ENCODE measurements at regions of chr15 and their contacts with region 1.

Region 1: GRCh38 chr15:83559310-83559966 is 94.5 kb upstream of the ADAMTSL3 start:
- DNase-seq: no peak
- H3K4me3 ChIP-seq: no peak overlapping the region
- H3K27ac ChIP-seq: no peak overlapping the region
- H3K4me1 ChIP-seq: peaks cover 0 to 24% (median 5%) of the 10 kb centered on the region in 3 donors
- H3K27me3 ChIP-seq: peaks cover 0 to 3% (median 0%) of the 10 kb centered on the region in 4 donors
- CTCF ChIP-seq: peak; percentile 38 to 85 (median 74)
- POLR2A ChIP-seq: no peak

Region 2: DNA sequence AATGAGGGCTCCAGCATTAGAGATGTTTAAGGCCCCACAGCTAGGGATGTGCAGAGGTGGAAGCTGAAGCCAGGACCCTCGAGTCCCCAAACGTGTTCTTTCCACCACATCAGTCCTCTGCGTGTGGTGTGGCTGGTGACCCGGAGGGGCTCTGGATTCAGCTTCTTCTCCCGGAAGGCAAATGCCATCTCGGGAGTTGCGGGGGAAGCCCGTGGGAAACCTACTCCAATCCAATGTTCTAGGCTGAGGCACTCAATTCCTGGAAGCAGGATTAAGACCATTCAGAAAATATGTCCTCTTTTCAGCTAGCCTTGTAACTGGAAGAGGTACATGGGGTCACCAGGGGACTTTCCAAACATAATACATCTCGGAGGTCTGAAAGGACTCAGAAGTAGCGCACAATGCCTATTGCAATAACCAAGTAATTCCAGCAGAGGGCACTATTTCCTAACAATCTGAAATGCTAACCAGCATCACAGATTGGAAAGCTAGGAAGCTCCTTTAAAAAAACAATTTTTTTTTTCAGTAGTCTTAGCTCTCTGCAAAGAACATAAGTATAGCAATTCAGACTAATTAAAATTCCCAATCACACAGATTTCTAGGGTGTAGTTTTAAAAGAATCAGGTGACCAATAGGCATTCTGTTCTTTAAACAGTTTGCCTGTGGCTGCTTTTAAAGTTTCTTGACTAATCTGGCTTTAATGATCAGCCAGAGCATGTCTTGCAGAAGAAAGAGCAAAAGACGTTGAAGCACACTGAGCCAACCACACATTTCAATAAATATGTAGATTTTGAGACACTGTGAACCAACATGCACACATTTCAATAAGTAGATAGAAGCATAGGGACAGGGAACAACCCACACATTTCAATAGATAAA is 311.0 kb before region 1 on chr15:
- intact Hi-C with region 1: loop called (anchors 10 kb)
- DNase-seq: no peak
- H3K4me3 ChIP-seq: no peak overlapping the region
- H3K27ac ChIP-seq: no peak overlapping the region
- H3K4me1 ChIP-seq: peaks cover 0 to 7% (median 3%) of the 10 kb centered on the region in 3 donors
- H3K27me3 ChIP-seq: peaks cover 0 to 57% (median 0%) of the 10 kb centered on the region in 4 donors
- CTCF ChIP-seq: peak; percentile 60 to 97 (median 94)
- POLR2A ChIP-seq: no peak

Region 3: DNA sequence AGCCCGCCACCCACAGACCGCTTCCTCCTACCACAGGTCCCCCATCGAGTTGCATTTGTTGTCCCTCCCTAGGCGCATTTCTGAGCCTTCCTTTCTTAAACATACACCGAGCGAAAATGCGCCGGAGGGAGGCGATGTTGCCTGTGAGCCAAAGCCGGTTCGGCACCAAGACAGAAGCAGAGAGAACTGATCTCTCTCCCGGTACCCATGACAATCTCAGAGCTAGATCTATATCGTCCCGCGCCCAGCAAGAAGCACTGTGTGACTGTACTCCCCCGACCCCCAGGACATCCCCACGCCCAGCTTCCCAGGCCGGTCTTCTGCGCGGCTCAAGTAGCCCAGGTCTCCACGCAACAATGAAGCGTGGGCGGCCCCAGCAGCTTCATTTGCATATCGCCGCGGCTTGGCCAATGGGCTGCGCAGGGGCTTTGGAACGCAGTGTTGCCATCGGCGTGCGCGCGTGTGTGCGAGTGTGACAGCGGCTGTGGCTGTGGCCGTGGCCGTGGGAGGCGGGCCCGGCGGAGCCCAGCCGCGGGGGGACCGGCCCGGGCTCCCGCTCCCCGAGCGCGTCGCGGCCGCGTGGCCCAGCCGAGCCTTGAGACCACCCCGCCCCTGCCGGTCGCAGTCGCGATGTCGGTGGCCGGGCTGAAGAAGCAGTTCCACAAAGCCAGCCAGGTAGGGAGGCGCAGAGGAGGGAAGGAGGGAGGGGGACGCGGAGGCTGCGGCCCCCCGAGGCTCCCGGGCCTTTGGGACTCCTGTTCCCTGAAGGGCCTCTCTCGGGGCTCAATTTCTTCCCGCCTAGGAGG is 112.3 kb before region 1 on chr15 and contains the start of gene SH3GL3:
- intact Hi-C with region 1: loop called (anchors 5 kb)
- DNase-seq: peak; percentile 19
- H3K4me3 ChIP-seq: peak within 1 kb of the TSS; percentile 47 to 70 (median 64)
- H3K27ac ChIP-seq: peak within 1 kb of the TSS in 3 of 4 donors; percentile 18 to 81 (median 22)
- H3K4me1 ChIP-seq: peaks cover 7 to 21% (median 13%) of the 10 kb centered on the region in 3 donors
- H3K27me3 ChIP-seq: peaks cover 0 to 49% (median 0%) of the 10 kb centered on the region in 4 donors
- CTCF ChIP-seq: peak in 5 of 6 experiments; percentile 18 to 50 (median 23)
- POLR2A ChIP-seq: peak in 1 of 4 donors; percentile 22
- total RNA-seq, gene SH3GL3: 0.57 to 5.7 (median 2.1) TPM

Region 4: GRCh38 chr15:83784975-83785374 is 225.5 kb after region 1 on chr15:
- intact Hi-C with region 1: no loop called
- DNase-seq: no peak
- H3K4me3 ChIP-seq: no peak overlapping the region
- H3K27ac ChIP-seq: no peak overlapping the region
- H3K4me1 ChIP-seq: no peaks in the 10 kb centered on the region
- H3K27me3 ChIP-seq: no peaks in the 10 kb centered on the region
- CTCF ChIP-seq: no peak
- POLR2A ChIP-seq: no peak